PC-9 (cell line): ENCODE measurements at regions of chr1 and their contacts with region 1.

Region 1: DNA sequence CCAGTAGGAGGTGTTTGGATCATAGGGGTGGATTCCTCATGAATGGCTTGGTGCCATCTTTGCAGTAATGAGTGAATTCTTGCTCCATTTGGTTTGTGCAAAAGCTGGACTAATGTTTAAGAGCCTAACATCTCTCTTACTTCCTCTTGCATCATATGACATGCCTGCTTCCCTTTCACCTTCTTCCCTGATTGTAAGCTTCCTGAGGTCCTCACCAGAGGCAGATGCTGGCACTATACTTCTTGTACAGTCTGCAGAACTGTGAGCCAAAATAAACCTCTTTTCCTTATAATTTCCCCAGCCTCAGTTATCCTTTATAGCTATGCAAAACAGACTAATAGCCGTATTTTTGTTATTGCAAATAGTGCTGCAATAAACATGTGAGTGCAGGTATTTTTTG is 8.1 kb downstream of the PRSS38 start:
- DNase-seq: no peak
- H3K4me3 ChIP-seq: no peak overlapping the region
- H3K27ac ChIP-seq: no peak overlapping the region
- H3K4me1 ChIP-seq: no peaks in the 10 kb centered on the region
- H3K27me3 ChIP-seq: no peaks in the 10 kb centered on the region; the same call in 1 of the 2 replicates
- CTCF ChIP-seq: no peak

Region 2: DNA sequence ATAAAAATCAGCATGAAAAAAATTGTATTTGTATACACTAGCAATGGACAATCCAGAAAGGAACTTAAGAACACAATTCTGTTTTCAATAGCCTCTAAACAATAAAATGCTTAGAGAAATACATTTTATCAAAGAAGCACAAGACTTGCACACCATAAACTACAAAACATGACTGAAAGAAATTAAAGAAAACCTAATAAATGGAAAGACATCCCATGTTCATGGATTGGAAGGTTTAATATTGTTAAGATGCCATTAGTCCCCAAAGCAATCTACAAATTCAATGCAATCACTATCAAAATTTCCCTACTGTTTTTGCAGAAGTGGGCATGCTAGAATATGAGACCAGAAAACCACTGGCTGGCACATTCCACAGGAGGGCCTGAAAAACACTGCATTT is 41.3 kb after region 1 on chr1:
- CTCF ChIA-PET with region 1: no interaction called
- POLR2A ChIA-PET with region 1: no interaction called
- intact Hi-C with region 1: loop called (anchors 5 kb)
- DNase-seq: no peak
- H3K4me3 ChIP-seq: no peak overlapping the region
- H3K27ac ChIP-seq: no peak overlapping the region
- H3K4me1 ChIP-seq: no peaks in the 10 kb centered on the region
- H3K27me3 ChIP-seq: peaks cover 12% of the 10 kb centered on the region
- CTCF ChIP-seq: no peak

Region 3: GRCh38 chr1:227886993-227887696 is 63.6 kb after region 1 on chr1:
- CTCF ChIA-PET with region 1: no interaction called
- POLR2A ChIA-PET with region 1: no interaction called
- intact Hi-C with region 1: no loop called
- DNase-seq: no peak
- H3K4me3 ChIP-seq: no peak overlapping the region
- H3K27ac ChIP-seq: no peak overlapping the region
- H3K4me1 ChIP-seq: 0 out of 2 replicates have a peak, but pooled peaks cover 7% of the 10 kb centered on the region
- H3K27me3 ChIP-seq: no peaks in the 10 kb centered on the region
- CTCF ChIP-seq: no peak